HCT116 (cell line): ENCODE measurements at regions of chr2 and their contacts with region 1.

Region 1: DNA sequence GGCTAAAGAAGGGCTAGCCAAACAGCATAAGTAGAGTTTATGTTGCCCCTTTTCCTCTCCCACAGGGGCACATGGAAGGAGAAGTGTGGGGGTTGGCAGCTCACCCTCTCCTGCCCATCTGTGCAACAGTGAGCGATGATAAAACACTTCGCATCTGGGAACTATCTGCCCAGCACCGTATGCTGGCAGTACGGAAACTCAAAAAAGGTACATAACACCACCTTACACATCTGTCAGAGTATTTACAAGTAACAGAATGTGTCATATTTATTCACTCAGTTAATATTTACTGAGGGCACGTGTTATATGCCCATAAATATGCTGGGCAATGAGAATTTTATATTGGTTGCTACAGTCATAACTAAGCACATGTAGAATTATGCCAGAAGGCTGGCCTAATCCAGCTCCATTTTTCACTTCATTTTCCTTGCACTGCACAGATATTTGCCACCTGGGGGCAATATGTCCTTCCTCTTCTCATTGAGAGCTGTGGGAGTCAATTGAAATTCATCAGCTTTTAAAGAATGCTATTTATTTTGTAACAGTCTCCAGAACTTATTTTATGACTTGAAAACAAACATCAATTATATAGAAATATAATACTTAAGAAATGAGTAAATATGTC is 150.6 kb downstream of the RTN4 start:
- DNase-seq: peak; percentile 21
- ATAC-seq: no peak
- H3K4me3 ChIP-seq: no peak overlapping the region
- H3K27ac ChIP-seq: no peak overlapping the region
- H3K4me1 ChIP-seq: peaks cover 13 to 23% of the 10 kb centered on the region in 2 experiments
- H3K27me3 ChIP-seq: no peaks in the 10 kb centered on the region
- CTCF ChIP-seq: peak; percentile 55 to 75 (median 65); a peak in 5 of 6 replicates
- POLR2A ChIP-seq: no peak
- RAD21 ChIP-seq: peak; percentile 88

Region 2: DNA sequence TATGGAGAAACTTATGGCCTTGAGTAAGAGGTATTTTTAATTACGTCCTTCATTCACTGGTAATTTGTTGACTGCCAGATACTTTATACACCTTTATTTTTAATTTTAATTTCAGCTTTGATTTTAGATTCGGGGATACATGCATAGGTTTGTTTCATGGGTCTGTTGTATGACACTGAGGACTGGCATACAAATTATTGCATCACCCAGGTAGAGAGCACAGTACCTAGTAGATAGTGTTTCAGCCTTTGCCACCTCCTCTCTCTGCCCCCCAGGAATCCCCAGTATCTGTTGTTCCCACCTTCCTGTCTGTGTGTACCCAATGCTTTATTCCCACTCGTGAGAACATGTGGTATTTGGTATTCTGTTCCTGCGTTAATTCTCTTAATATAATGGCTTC is 12.6 kb after region 1 on chr2:
- CTCF ChIA-PET with region 1: interaction called, 11 read pairs
- POLR2A ChIA-PET with region 1: no interaction called
- RAD21 ChIA-PET with region 1: no interaction called
- intact Hi-C with region 1: no loop called
- DNase-seq: no peak
- ATAC-seq: no peak
- H3K4me3 ChIP-seq: no peak overlapping the region
- H3K27ac ChIP-seq: no peak overlapping the region
- H3K4me1 ChIP-seq: no peaks in the 10 kb centered on the region
- H3K27me3 ChIP-seq: no peaks in the 10 kb centered on the region
- CTCF ChIP-seq: no peak
- POLR2A ChIP-seq: no peak
- RAD21 ChIP-seq: no peak

Region 3: GRCh38 chr2:55050133-55050994 is 150.7 kb after region 1 on chr2 and contains the start of gene RTN4:
- CTCF ChIA-PET with region 1: interaction called, 8 read pairs
- POLR2A ChIA-PET with region 1: interaction called, 4 read pairs
- RAD21 ChIA-PET with region 1: interaction called in 1 of 2 experiments, 5 read pairs
- intact Hi-C with region 1: loop called (anchors 2 kb)
- DNase-seq: peak; percentile 97
- ATAC-seq: peak; percentile 81
- H3K4me3 ChIP-seq: peak within 1 kb of the TSS; percentile 90 to 93
- H3K27ac ChIP-seq: peak within 1 kb of the TSS; percentile 90
- H3K4me1 ChIP-seq: peaks cover 33 to 72% of the 10 kb centered on the region in 2 experiments
- H3K27me3 ChIP-seq: no peaks in the 10 kb centered on the region
- CTCF ChIP-seq: 0 out of 6 replicates have a peak, but pooled peaks of 1 of the 3 experiments have one; percentile 10
- POLR2A ChIP-seq: peak; percentile 95
- RAD21 ChIP-seq: 0 out of 2 replicates have a peak, but pooled peaks have one; percentile 22
- total RNA-seq, gene RTN4: 221 TPM

Region 4: DNA sequence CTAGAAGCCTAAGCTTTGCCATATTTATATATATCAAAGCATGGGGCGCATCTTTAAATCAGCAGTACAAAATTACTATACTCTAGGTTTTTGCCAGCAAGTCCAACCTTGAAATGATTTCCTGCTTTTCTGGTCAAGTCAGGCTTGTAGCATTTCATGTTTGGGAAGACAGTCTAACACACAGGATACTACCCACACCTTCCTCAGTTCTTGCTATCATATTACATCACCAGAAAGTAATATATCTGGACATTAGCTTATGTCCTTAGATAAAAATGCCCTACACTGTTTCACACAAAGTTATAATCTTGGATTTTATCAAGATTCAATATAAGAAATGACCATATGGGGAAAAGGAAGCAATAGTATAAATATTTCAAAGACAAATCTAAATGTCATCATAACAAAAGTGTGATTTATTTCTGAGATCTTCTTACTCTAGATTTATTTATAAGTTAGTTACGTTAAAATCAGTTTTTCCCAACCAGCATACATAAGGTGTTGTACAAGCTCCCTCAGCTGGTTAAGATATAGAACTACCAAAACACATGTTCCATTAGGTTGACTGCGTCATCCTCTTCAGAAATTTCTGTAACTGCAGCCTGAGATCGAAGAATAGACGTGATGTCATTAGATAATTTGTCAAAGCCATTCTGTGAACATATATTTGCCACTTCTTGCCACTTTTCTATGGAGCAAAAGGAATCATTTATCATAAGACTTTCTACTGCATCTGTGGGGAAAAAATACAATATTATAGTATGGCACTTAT is 275.8 kb after region 1 on chr2:
- CTCF ChIA-PET with region 1: interaction called, 46 read pairs
- POLR2A ChIA-PET with region 1: no interaction called
- RAD21 ChIA-PET with region 1: interaction called, 5 to 6 read pairs
- intact Hi-C with region 1: loop called (anchors 1 kb)
- DNase-seq: peak; percentile 37
- ATAC-seq: peak; percentile 81
- H3K4me3 ChIP-seq: no peak overlapping the region
- H3K27ac ChIP-seq: no peak overlapping the region
- H3K4me1 ChIP-seq: no peaks in the 10 kb centered on the region; a peak in 1 of 4 replicates
- H3K27me3 ChIP-seq: no peaks in the 10 kb centered on the region
- CTCF ChIP-seq: peak; percentile 34 to 69 (median 66); a peak in 4 of 6 replicates
- POLR2A ChIP-seq: no peak
- RAD21 ChIP-seq: peak; percentile 90

Region 5: GRCh38 chr2:55519938-55520885 is 620.5 kb after region 1 on chr2:
- CTCF ChIA-PET with region 1: no interaction called
- POLR2A ChIA-PET with region 1: no interaction called
- RAD21 ChIA-PET with region 1: no interaction called
- intact Hi-C with region 1: loop called (anchors 10 kb)
- DNase-seq: no peak
- ATAC-seq: peak; percentile 12
- H3K4me3 ChIP-seq: peak overlapping the region; percentile 77 to 86
- H3K27ac ChIP-seq: peak overlapping the region; percentile 41
- H3K4me1 ChIP-seq: peaks cover 3 to 11% of the 10 kb centered on the region in 2 experiments; a peak in 3 of 4 replicates
- H3K27me3 ChIP-seq: no peaks in the 10 kb centered on the region
- CTCF ChIP-seq: no peak
- POLR2A ChIP-seq: no peak
- RAD21 ChIP-seq: no peak